A549 (cell line): ENCODE measurements at regions of chr18 and their contacts with region 1.

Region 1: GRCh38 chr18:77000527-77000926 is 132.1 kb downstream of the MBP start:
- DNase-seq: peak; percentile 16 to 23
- ATAC-seq: peak; percentile 48 to 54; a peak in 3 of 6 replicates
- H3K4me3 ChIP-seq: no peak overlapping the region
- H3K27ac ChIP-seq: peak overlapping the region in 1 of 2 experiments; percentile 53; a peak in 2 of 6 replicates
- H3K4me1 ChIP-seq: no peaks in the 10 kb centered on the region
- CTCF ChIP-seq: peak; percentile 85
- EP300 ChIP-seq: no peak
- POLR2A ChIP-seq: no peak
- RAD21 ChIP-seq: peak; percentile 82 to 83

Region 2: DNA sequence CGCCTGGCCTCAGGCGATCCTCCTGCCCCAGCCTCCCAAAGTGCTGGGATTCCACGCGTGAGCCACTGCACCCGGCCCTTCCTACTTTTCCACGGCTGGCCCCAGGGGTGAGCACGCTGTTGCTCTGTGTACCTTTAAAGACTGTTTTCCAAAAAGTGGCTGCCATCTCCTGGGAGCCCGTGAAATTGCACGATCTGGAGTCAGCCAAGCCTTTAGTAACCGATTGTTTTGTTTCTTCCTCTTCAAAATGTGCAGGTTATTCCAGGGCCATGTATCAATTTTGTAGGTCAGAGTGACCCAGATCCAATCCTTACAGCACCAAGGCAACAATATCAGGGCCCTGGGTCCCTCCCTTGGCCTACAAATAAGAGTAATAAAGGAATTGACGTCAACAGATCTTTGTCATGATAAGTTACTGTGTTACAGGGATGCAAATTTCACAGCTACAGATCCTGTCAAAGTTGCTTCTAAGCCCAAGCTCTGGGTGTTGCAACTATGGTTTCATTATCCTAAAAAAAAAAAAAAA is 313.7 kb before region 1 on chr18:
- CTCF ChIA-PET with region 1: no interaction called
- POLR2A ChIA-PET with region 1: no interaction called
- DNase-seq: peak; percentile 42 to 49
- ATAC-seq: peak; percentile 84 to 94; a peak in 5 of 6 replicates
- H3K4me3 ChIP-seq: no peak overlapping the region
- H3K27ac ChIP-seq: peak overlapping the region in 1 of 2 experiments; percentile 58; a peak in 2 of 6 replicates
- H3K4me1 ChIP-seq: peaks cover 4% of the 10 kb centered on the region; the same call in 1 of the 3 replicates
- CTCF ChIP-seq: peak; percentile 58
- EP300 ChIP-seq: no peak
- POLR2A ChIP-seq: no peak
- RAD21 ChIP-seq: peak; percentile 71 to 73

Region 3: GRCh38 chr18:76937597-76937996 is 62.9 kb before region 1 on chr18:
- CTCF ChIA-PET with region 1: no interaction called
- POLR2A ChIA-PET with region 1: no interaction called
- DNase-seq: no peak
- ATAC-seq: no peak
- H3K4me3 ChIP-seq: no peak overlapping the region
- H3K27ac ChIP-seq: no peak overlapping the region
- H3K4me1 ChIP-seq: no peaks in the 10 kb centered on the region
- CTCF ChIP-seq: no peak
- EP300 ChIP-seq: no peak
- POLR2A ChIP-seq: no peak
- RAD21 ChIP-seq: no peak

Region 4: GRCh38 chr18:76982841-76983587 is 17.5 kb before region 1 on chr18:
- CTCF ChIA-PET with region 1: interaction called, 46 read pairs
- POLR2A ChIA-PET with region 1: no interaction called
- DNase-seq: peak; percentile 68 to 73
- ATAC-seq: peak; percentile 85 to 94
- H3K4me3 ChIP-seq: no peak overlapping the region
- H3K27ac ChIP-seq: no peak overlapping the region
- H3K4me1 ChIP-seq: no peaks in the 10 kb centered on the region
- CTCF ChIP-seq: peak; percentile 68
- EP300 ChIP-seq: no peak
- POLR2A ChIP-seq: no peak
- RAD21 ChIP-seq: peak; percentile 51 to 59; a peak in 4 of 5 replicates

Region 5: GRCh38 chr18:77013811-77014521 is 13.4 kb after region 1 on chr18:
- CTCF ChIA-PET with region 1: interaction called, 11 read pairs
- POLR2A ChIA-PET with region 1: no interaction called
- DNase-seq: no peak
- ATAC-seq: no peak
- H3K4me3 ChIP-seq: no peak overlapping the region
- H3K27ac ChIP-seq: no peak overlapping the region
- H3K4me1 ChIP-seq: no peaks in the 10 kb centered on the region
- CTCF ChIP-seq: no peak
- EP300 ChIP-seq: no peak
- POLR2A ChIP-seq: no peak
- RAD21 ChIP-seq: no peak

Region 6: DNA sequence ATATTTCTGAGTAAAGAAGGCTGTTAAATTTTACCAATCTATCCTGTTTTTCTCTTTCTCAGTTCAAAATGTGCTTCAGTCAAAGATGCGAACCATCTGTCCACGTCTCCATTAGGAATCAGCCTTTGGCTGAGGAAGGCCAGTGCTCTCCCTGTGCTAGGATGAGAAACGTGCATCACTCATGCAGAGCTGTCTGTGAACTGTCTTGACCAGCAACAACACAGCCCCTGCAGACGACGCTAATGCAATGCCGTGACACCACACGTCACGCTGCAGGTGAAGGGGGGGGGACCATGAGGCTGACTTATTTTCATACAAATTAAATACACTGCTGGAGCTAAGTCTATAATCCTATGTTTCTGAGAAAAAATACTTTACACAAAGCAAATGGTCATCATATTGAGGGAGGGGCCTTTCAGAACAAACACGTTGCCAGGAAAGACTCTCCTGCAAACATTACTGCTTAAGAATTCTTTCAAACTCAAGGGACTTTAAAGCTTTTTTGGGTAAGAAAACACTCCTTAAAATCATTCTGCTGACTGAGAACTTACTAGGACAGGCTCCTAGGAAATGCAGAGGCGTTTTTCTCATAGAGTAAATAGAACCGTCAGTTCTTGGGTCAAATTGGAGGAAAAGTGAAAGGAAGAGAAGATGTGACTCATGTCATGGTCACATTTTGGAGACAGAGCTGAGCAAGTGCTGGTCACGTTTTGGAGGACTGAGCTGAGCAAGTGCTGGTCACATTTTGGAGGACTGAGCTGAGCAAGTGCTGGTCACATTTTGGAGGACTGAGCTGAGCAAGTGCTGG is 35.1 kb after region 1 on chr18:
- CTCF ChIA-PET with region 1: interaction called, 11 read pairs
- POLR2A ChIA-PET with region 1: no interaction called
- DNase-seq: no peak
- ATAC-seq: no peak
- H3K4me3 ChIP-seq: no peak overlapping the region
- H3K27ac ChIP-seq: no peak overlapping the region
- H3K4me1 ChIP-seq: no peaks in the 10 kb centered on the region
- CTCF ChIP-seq: no peak
- EP300 ChIP-seq: no peak
- POLR2A ChIP-seq: no peak
- RAD21 ChIP-seq: no peak

Region 7: DNA sequence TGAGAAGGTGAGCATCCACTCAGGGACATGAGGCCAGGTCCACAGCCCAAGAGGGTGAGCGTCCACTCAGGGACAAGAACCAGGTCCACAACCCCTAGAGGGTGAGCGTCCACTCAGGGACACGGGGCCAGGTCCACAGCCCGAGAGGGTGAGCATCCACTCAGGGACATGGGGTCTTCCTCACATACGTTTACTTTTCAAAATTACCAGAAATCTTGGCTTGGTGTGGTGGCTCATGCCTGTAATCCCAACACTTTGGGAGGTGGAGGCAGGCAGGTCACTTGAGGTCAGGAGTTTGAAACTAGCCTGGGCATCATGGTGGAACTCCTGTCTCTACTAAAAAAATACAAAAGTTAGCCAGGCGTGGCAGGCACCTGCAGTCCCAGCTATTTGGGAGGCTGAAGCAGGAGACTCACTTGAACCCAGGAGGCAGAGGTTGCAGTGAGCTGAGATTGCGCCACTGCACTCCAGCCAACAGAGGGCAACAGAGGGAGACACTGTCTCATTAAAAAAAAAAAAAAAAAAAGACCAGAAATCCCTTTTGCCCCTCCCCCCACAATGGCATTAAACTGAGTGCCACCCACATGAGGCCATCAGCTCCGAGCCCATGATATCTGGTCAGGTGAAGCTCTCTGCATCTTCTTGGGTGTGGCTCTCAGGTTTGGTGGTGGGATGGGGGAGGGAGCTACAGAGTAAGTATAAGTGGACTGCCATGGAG is 141.0 kb after region 1 on chr18:
- CTCF ChIA-PET with region 1: no interaction called
- POLR2A ChIA-PET with region 1: no interaction called
- DNase-seq: no peak
- ATAC-seq: no peak
- H3K4me3 ChIP-seq: no peak overlapping the region
- H3K27ac ChIP-seq: no peak overlapping the region
- H3K4me1 ChIP-seq: no peaks in the 10 kb centered on the region
- CTCF ChIP-seq: no peak
- EP300 ChIP-seq: no peak
- POLR2A ChIP-seq: no peak
- RAD21 ChIP-seq: no peak

Region 8: GRCh38 chr18:77207540-77207939 is 207.0 kb after region 1 on chr18:
- CTCF ChIA-PET with region 1: interaction called, 34 read pairs
- POLR2A ChIA-PET with region 1: no interaction called
- DNase-seq: peak; percentile 68 to 76
- ATAC-seq: peak; percentile 94 to 95
- H3K4me3 ChIP-seq: no peak overlapping the region
- H3K27ac ChIP-seq: peak overlapping the region; percentile 52 to 72; a peak in 5 of 6 replicates
- H3K4me1 ChIP-seq: peaks cover 16% of the 10 kb centered on the region
- CTCF ChIP-seq: peak; percentile 39; the same call in 2 of the 3 replicates
- EP300 ChIP-seq: no peak
- POLR2A ChIP-seq: no peak
- RAD21 ChIP-seq: 0 out of 5 replicates have a peak, but pooled peaks of 1 of the 2 experiments have one; percentile 16